Dorsolateral prefrontal cortex (tissue), 120 donors: ENCODE measurements at regions of chr2 and their contacts with region 1.

Region 1: DNA sequence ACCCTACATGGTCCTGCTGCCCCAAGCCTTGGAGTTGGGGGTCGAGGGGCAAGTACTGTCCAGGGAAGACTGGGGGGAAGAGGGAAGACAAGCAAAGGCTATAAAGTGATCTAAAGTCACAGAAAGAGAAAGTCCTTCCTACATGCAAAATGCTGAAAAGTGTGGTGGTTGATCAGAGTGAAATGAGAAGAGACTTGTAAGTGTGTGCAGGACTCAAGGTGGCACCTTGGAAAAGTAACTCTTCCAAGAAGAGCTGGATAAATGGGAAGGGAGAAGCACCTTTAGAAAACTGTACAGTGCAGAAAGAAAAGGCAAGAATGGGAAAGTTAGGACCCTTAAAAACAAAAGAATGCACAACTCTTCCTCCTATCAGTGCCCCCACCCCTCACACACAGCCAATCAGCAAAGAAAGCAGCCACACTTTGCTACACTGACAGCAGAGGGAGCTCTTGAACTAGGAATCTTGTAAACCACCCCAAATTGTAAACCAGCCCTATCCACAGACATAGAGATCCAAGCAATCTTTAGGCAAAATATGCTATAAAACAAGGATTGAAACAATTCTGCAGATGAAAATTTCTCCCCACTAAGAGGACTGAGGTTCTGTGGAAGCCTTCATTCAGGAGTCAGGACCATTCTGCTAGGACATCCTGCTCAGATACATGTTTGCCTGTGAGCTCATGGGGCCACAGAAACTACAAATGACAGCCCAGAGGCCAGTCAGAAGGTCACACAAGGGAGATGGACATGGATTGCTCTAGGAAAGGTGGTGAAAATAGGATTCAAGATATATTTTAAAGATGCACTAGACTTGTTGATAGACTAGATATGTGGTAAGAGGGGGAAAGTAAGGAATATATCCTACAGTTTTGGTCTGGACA is 146.4 kb downstream of the FTCDNL1 start:
- DNase-seq: peak in 2 of 10 donors; percentile 27 to 33
- H3K4me3 ChIP-seq: no peak overlapping the region
- H3K27ac ChIP-seq: no peak overlapping the region
- H3K27me3 ChIP-seq: no peaks in the 10 kb centered on the region
- CTCF ChIP-seq: peak in 55 of 56 donors; percentile 23 to 84 (median 63)

Region 2: GRCh38 chr2:199431746-199432213 is 272.8 kb before region 1 on chr2:
- intact Hi-C with region 1: no loop called
- DNase-seq: no peak
- H3K4me3 ChIP-seq: peak overlapping the region in 7 of 59 donors; percentile 2 to 39 (median 9)
- H3K27ac ChIP-seq: peak overlapping the region in 8 of 59 donors; percentile 5 to 46 (median 34)
- H3K27me3 ChIP-seq: no peaks in the 10 kb centered on the region
- CTCF ChIP-seq: no peak

Region 3: GRCh38 chr2:199804831-199805230 is 100.2 kb after region 1 on chr2:
- intact Hi-C with region 1: no loop called
- DNase-seq: no peak
- H3K4me3 ChIP-seq: peak overlapping the region in 2 of 59 donors; percentile 7 to 21
- H3K27ac ChIP-seq: peak overlapping the region in 50 of 59 donors; percentile 1 to 86 (median 50)
- H3K27me3 ChIP-seq: no peaks in the 10 kb centered on the region
- CTCF ChIP-seq: peak in 12 of 56 donors; percentile 10 to 43 (median 18)

Region 4: DNA sequence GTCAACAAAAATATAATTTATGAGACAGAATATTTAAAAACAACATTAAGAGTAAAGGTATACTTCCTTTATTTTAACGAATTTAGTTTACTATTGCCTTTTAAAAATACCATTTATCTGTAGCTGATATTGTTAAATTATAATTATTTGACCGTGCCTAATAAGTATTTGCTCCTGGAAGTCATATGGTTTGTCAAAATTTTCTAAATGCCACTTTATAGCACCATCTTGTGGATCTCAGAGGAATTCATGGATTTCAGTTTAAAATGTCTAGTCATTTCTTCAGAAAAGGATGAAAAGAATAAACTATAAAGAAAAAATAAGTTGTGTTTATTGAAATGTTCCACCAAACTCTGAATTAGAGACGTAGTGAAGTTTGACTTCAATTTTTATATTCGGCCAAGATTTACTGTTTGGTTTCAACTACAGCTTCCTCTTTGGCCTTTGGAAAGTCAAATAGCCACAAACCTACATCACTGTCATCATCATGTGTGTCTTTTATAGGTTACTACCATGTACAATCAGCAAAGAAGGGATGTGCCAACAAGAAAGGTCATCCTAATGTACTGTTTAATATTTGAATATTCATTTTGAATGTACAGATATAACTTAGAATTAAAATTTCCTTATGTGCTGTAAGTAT is 156.7 kb after region 1 on chr2:
- intact Hi-C with region 1: loop called (anchors 2 to 10 kb)
- DNase-seq: no peak
- H3K4me3 ChIP-seq: peak overlapping the region in 2 of 59 donors; percentile 13
- H3K27ac ChIP-seq: no peak overlapping the region
- H3K27me3 ChIP-seq: no peaks in the 10 kb centered on the region
- CTCF ChIP-seq: peak; percentile 60 to 94 (median 80)

Region 5: DNA sequence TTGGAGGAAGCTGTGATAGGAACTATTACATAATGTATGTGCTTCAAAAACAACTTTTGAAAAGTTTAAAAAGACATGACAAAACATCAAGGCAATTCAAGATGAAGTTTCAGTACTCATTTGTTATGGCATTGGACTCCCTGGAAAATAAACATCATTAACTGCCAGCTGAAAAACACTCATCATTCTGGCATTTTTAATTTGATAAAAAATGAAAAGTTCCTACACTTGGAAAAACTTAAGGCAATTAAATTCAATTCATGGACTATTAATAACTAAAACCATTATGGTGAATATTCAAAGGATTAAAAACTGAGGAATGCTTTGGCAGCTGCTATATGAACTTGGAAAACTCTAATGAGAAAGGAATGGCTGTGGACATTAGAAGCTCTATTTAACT is 242.2 kb after region 1 on chr2:
- intact Hi-C with region 1: loop called in 1 of 2 experiments (anchors 5 kb)
- DNase-seq: no peak
- H3K4me3 ChIP-seq: no peak overlapping the region
- H3K27ac ChIP-seq: peak overlapping the region in 15 of 59 donors; percentile 8 to 73 (median 29)
- H3K27me3 ChIP-seq: no peaks in the 10 kb centered on the region
- CTCF ChIP-seq: no peak